Activated T-helper 2 cell treated with anti-CD3 and anti-CD28 coated beads, Interferon-gamma antibody, Interleukin-2, Interleukin-4, amounts not matched to agents 10 μg/mL and 5 μg/mL and 100 μg/mL, durations not matched to agents 14 hours and 24 hours and 36 hours (primary cell): ENCODE measurements at regions of chr3 and their contacts with region 1.

Region 1: GRCh38 chr3:179653096-179653797 is 407 bp downstream of the USP13 start:
- DNase-seq: peak; percentile 58
- H3K4me3 Mint-ChIP-seq: peak overlapping the region; percentile 94
- H3K27ac Mint-ChIP-seq: peak overlapping the region; percentile 83
- H3K4me1 Mint-ChIP-seq: peaks cover 26% of the 10 kb centered on the region
- H3K27me3 Mint-ChIP-seq: peaks cover 10% of the 10 kb centered on the region

Region 2: DNA sequence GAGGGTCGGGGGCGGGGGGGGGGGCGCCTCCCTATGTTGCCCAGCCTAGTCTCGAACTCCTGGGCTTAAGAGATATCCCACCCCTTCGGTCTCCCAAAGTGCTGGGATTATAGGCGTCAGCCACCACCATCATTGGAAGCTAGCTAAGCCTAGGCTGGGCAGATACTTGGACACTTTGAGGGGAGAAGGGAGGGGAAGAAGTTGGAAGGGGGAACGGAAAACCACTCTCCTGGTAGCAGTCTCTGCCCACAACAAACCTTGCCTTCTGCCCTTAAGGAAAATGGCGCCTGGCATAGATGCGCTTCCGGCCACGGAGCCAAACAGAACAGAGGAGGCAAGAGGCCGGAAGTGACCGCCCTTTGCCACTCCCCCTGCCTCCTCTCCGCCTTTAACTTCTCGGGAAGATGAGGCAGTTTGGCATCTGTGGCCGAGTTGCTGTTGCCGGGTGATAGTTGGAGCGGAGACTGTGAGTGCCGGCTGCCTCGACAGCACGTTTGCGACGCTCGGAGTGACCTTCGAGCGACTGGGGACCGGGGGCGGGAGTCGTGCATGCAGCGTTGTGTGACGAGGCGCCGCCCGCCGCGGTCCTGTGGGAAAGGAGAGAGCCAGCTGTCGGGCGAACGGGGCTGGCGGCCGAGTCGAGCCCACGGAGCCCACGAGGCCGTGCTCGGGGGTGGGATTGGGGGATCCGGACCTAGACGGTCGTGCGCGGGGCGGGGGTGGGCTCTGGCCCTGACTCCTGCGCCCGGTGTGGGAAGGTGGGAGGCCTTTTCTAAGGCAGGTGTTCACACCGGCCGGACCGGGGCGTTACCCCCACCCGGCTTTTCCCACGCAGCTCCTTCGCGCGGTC is 305.7 kb before region 1 on chr3 and contains the start of gene MFN1:
- intact Hi-C with region 1: loop called (anchors 5 kb)
- DNase-seq: peak; percentile 88
- H3K4me3 Mint-ChIP-seq: peak within 1 kb of the TSS; percentile 91
- H3K27ac Mint-ChIP-seq: peak within 1 kb of the TSS; percentile 89
- H3K4me1 Mint-ChIP-seq: peaks cover 15% of the 10 kb centered on the region
- H3K27me3 Mint-ChIP-seq: no peaks in the 10 kb centered on the region
- total RNA-seq, gene MFN1: 32.2 and 38.2 TPM in 2 replicates

Region 3: DNA sequence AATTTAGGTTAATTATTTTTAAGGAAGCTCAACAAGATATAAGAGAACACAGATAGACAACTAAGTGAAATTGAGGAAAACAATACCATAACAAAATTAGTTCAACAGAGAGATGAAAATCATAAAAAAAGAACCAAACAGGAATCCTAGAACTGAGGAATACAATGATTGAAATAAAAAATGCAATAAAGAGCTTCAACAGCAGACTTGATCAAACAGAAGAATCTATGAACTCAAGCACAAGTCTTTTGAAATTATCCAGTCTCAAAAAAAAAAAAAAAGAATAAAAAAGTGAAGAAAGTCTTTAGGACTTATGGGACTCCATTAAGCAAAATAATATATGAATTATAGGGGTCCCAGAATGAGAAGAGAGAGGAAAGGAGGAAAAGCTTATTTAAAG is 160.0 kb before region 1 on chr3:
- intact Hi-C with region 1: no loop called
- DNase-seq: no peak
- H3K4me3 Mint-ChIP-seq: no peak overlapping the region
- H3K27ac Mint-ChIP-seq: no peak overlapping the region
- H3K4me1 Mint-ChIP-seq: no peaks in the 10 kb centered on the region
- H3K27me3 Mint-ChIP-seq: peaks cover 1% of the 10 kb centered on the region

Region 4: DNA sequence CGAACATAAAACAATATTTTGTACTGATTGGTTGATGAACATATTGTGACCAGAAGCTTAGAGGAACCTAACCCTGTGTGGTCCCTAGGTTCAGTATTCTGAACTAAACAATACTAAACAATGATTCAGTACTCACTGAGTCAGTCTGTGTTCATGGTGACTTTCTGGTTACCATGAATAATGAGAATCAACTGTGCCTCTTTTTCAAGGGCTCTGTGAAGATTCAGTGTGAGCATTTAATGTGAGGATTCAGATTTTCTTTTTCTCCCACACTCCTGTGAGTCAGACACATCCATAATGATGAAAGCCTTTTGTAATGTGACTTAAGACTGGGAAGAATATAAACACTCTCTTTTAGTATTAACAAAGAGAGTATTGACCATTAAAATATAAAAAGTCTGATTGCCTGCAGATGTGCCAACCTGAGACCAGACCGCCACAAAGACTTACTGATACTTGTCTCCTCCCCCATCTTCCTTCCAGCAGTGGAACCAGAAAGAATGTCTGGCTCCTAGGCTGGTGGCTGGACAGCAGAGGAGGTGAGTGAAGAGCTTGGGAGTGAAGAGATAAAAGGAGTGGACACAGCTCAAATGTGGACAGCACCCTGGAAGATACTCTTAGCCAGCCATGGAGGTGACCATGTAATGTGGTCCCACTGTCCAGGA is 108.1 kb before region 1 on chr3:
- intact Hi-C with region 1: no loop called
- DNase-seq: no peak
- H3K4me3 Mint-ChIP-seq: no peak overlapping the region
- H3K27ac Mint-ChIP-seq: no peak overlapping the region
- H3K4me1 Mint-ChIP-seq: peaks cover 17% of the 10 kb centered on the region
- H3K27me3 Mint-ChIP-seq: peaks cover 2% of the 10 kb centered on the region

Region 5: GRCh38 chr3:179562591-179563270 is 90.5 kb before region 1 on chr3 and contains the start of gene ACTL6A:
- intact Hi-C with region 1: loop called (anchors 1 kb)
- DNase-seq: peak; percentile 98
- H3K4me3 Mint-ChIP-seq: peak within 1 kb of the TSS; percentile 98
- H3K27ac Mint-ChIP-seq: peak within 1 kb of the TSS; percentile 98
- H3K4me1 Mint-ChIP-seq: peaks cover 30% of the 10 kb centered on the region
- H3K27me3 Mint-ChIP-seq: peaks cover 14% of the 10 kb centered on the region
- total RNA-seq, gene ACTL6A: 114 and 121 TPM in 2 replicates

Region 6: DNA sequence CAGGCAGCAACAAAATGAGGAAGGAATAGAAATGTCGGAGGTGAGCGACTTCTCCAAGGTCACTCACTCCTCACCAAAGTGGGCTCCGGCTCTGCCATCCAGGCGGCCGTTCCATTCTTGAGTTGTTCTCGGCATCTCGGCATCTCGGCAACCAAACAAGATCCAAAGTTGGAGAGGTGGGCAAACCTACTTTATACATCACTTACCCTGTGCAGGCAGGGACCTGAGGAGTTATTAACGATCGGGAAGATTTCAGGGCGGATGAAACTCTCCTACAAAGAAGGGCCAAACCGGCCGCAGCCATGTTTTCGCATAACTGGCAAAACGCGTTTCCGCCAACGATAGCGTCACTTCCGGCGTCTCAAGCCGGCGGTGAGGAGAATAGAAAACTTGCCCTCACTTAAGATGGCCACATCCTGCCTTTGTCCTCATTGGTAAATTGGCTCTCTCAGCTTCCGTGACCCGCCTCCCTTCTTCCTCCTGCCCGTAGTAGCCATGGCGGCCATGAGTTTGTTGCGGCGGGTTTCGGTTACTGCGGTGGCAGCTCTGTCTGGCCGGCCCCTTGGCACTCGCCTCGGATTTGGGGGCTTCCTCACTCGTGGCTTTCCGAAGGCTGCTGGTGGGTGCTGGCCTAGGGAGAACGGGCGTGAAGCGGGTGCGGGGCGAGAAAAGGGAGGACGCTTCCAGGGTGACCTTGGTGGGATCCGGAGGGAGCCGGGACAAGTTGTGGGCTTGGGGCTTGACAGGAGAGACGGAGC is 48.7 kb before region 1 on chr3 and contains the starts of genes MRPL47 and NDUFB5:
- intact Hi-C with region 1: loop called (anchors 1 kb)
- DNase-seq: peak; percentile 91
- H3K4me3 Mint-ChIP-seq: peak within 1 kb of the TSS; percentile 99
- H3K27ac Mint-ChIP-seq: peak within 1 kb of the TSS; percentile 99
- H3K4me1 Mint-ChIP-seq: peaks cover 31% of the 10 kb centered on the region
- H3K27me3 Mint-ChIP-seq: no peaks in the 10 kb centered on the region
- total RNA-seq, gene MRPL47: 61.2 and 64.4 TPM in 2 replicates
- total RNA-seq, gene NDUFB5: 90.3 and 91.6 TPM in 2 replicates

Region 7: DNA sequence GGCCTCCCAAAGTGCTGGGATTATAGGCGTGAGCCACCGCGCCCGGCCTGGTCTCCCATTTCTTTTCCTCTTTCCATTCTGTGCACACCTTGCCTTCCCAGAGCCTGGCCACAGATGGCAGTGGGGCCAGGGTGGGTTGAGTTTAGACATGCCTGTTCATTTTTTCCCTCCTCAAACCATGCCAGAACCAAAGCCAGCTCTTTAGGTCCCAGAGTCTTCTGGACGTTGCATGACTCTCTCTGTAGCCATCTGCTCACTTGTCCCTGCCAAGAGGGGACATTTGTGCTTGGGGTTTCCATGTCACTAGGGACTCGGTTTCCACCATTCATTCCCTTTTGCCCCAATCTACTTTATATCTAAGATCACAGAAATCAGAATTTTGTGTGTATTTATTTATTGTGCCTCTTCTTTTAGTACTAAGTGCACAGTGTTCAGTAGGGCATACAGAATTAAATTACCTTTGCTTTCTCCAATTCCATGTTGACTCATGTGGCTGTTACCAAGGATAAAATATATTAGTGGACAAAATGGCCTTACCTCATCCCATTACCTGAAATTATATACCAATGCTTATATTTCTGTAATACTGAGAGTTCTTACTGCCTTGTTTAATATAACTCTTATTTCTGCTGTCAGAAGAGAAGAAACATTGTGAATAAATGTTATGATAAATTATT is 49.2 kb after region 1 on chr3:
- intact Hi-C with region 1: loop called (anchors 5 kb)
- DNase-seq: no peak
- H3K4me3 Mint-ChIP-seq: no peak overlapping the region
- H3K27ac Mint-ChIP-seq: no peak overlapping the region
- H3K4me1 Mint-ChIP-seq: peaks cover 10% of the 10 kb centered on the region
- H3K27me3 Mint-ChIP-seq: no peaks in the 10 kb centered on the region

Region 8: DNA sequence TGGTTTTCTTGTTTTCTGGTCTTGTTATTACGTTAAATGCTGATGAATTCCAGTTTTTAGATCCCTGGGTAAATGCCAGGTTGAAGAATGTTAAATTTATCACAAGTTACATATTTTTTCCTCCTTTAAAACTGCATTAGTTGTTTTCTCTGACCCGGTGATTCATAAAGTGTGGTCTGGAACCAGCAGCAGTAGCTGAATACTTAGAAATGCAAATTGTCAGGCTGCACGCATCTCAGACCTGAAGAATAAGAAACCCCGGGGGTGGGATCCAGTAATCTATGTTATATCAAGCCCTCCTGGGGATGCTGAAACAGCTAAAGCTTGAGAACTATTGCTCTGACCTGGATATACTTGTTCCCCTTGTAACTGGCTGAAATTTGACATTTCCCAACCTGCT is 314.4 kb after region 1 on chr3:
- intact Hi-C with region 1: loop called (anchors 10 kb)
- DNase-seq: no peak
- H3K4me3 Mint-ChIP-seq: no peak overlapping the region
- H3K27ac Mint-ChIP-seq: peak overlapping the region; percentile 35
- H3K4me1 Mint-ChIP-seq: peaks cover 24% of the 10 kb centered on the region
- H3K27me3 Mint-ChIP-seq: peaks cover 12% of the 10 kb centered on the region

Region 9: GRCh38 chr3:179991883-179992282 is 338.6 kb after region 1 on chr3:
- intact Hi-C with region 1: no loop called
- DNase-seq: no peak
- H3K4me3 Mint-ChIP-seq: no peak overlapping the region
- H3K27ac Mint-ChIP-seq: no peak overlapping the region
- H3K4me1 Mint-ChIP-seq: no peaks in the 10 kb centered on the region
- H3K27me3 Mint-ChIP-seq: peaks cover 4% of the 10 kb centered on the region

Region 10: DNA sequence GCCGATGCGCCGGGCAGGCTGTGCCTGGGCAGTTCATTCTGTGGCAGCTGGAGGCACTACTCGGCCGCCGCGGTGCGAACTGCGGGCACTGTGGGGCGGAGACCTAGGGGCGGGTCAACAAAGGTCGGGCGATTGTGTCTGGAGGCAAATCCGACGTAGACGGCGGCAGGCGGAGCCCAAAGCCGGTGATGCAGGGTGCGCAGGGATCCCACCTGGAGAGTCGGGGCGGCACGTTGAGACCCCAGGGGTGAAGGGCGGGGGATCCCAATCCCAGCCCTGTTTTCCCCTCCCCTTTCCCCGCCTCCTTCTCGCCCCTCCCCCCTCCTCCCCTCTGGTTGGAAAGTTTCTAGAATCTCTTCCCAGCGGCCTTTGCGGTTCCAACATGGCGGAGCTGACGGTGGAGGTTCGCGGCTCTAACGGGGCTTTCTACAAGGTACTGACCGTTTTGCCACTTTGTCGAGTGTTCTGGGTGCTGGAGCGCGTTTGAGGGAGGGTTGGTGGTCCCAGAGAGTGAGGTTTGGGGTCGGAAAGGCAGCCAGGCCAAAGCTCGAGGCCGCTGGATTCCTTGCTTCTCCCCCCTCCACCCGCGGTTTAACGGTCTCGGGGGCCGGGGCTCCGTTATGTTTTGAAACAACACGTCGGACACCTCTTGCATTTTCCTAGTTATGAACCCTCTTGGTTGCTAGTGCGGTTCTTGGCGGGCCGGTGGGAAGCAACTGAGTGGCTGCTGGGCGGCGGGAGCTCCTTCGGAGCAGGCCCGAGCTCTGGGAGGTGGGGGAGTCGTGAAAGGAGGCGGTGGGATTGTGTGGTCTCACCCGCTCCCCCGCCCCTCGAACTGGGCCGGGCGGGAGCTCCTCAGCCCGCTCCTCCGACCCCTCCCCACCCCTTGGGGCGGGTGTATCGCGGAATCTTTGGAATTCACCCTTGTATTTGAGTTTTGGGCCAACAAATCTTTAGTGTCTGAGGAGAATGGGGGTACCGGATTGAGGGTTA is 1259.4 kb after region 1 on chr3 and contains the start of gene FXR1:
- intact Hi-C with region 1: loop called (anchors 5 kb)
- DNase-seq: peak; percentile 79
- H3K4me3 Mint-ChIP-seq: peak within 1 kb of the TSS; percentile 99
- H3K27ac Mint-ChIP-seq: peak within 1 kb of the TSS; percentile 95
- H3K4me1 Mint-ChIP-seq: peaks cover 31% of the 10 kb centered on the region
- H3K27me3 Mint-ChIP-seq: no peaks in the 10 kb centered on the region
- total RNA-seq, gene FXR1: 163 and 170 TPM in 2 replicates